Dorsolateral prefrontal cortex (tissue), 120 donors: ENCODE measurements at regions of chr16 and their contacts with region 1.

Region 1: DNA sequence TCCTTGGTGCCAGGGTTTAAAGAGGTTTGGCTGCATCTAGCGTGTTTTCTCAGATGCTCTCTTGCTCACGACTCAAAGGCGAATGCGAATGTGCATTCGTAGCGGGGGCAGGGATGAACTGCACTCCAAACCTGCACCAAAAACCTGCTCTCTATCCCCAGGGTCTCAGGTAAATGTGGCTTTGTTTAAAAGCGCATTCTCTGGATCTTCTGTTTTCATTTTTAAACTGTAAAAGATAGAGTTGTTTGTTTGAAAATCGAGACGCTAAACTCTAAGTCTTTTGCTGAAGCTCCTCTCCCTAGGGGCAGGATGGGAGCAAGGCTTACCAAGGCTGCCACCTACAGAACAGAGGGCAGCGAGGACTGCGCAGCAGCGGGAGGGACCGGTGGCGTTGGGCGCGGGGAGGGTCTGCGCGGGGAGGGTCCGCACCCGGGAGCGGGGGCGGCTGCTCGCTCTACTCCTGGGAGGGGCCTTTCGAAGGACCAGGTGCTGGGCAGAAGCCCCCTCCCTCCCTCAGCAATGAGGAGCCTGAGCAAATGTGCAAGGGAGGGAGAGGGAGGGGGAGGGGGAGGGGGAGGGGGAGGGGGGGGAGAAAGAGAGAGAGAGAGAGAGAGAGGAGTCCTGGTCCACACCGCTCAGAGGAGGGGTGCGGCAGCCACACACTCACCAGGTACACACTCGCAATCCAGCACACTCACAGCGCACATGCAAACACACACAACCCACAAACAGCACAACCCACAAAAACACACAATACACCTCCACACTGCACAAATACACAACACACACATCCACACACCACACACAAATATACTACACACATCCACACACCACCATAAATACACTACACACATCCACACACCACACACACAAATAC is 142.8 kb downstream of the GRIN2A start:
- DNase-seq: peak; percentile 55 to 79 (median 68)
- H3K4me3 ChIP-seq: peak overlapping the region; percentile 24 to 71 (median 50)
- H3K27ac ChIP-seq: peak overlapping the region in 58 of 59 donors; percentile 10 to 97 (median 85)
- H3K27me3 ChIP-seq: no peaks in the 10 kb centered on the region
- CTCF ChIP-seq: peak in 53 of 56 donors; percentile 16 to 72 (median 52)

Region 2: DNA sequence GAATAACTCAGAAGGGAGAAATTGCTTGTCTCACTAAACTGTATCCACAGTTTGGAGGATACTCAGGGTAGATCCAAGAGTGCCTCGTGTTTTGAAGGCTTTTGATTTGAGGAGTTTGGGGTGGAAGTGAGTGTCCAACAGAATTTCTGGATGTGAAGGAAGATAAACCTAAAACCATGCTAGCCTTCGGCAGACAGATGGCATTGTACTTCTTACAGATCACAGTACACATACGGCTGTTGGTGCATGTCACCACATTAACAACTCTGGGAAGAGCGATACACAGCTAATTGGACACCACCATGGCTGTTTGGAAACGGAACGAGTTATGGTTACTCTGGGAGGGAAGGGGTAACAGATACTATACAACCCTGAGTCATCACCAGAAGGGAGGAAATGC is 277.6 kb before region 1 on chr16:
- intact Hi-C with region 1: loop called in 1 of 2 experiments (anchors 5 kb)
- DNase-seq: peak in 2 of 10 donors; percentile 11 to 50
- H3K4me3 ChIP-seq: peak overlapping the region in 2 of 59 donors; percentile 24 to 25
- H3K27ac ChIP-seq: peak overlapping the region in 9 of 59 donors; percentile 2 to 48 (median 27)
- H3K27me3 ChIP-seq: no peaks in the 10 kb centered on the region
- CTCF ChIP-seq: peak in 51 of 56 donors; percentile 18 to 74 (median 49)

Region 3: GRCh38 chr16:9976601-9977000 is 62.9 kb before region 1 on chr16:
- intact Hi-C with region 1: loop called in 1 of 2 experiments (anchors 10 kb)
- DNase-seq: peak; percentile 23 to 91 (median 83)
- H3K4me3 ChIP-seq: peak overlapping the region in 6 of 59 donors; percentile 6 to 16 (median 11)
- H3K27ac ChIP-seq: peak overlapping the region; percentile 77 to 100 (median 94)
- H3K27me3 ChIP-seq: no peaks in the 10 kb centered on the region
- CTCF ChIP-seq: no peak